SK-N-SH (cell line): ENCODE measurements at regions of chr11 and their contacts with region 1.

Region 1: DNA sequence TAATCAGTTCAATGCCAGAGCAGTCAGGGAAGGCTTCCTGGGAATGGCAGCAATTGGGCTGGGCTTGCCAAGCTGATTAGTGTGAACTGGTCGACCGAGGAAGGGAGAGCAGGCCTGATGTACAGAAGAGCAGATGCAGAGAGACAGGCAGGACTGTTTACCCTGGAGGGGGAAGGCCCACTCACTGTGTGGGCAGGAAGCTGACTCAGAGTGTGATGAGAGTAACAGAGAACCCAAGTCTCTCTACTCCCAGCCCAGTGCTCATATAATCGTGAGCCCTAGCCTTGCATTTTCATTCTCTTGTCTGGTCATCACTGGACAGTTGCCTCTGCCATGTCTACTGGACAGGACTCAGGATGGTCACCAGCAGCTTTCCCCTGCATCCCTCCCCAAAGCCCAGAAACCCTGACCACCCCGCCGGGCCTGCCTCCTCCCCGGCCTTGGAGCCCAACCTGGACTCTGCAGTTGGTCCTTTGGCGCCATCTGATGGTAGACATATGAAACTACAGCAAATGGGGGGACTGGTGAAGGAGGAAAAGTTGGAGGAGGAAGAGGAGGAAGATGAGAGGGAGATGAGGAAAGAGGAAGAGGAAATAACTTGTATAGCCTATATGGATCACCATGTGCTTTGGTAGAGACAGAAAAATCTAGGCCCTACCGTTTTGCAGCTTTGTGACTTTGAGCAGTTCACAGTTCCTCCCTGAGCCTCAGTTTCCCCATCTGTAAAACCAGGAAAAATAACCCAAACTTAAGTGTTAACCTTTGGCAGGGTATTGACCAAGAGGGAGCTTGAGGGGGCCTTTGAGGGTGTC is 43.4 kb upstream of the PRDM11 start:
- DNase-seq: peak; percentile 87
- H3K4me3 ChIP-seq: peak overlapping the region in 1 of 2 experiments; percentile 49; a peak in 2 of 4 replicates
- H3K27ac ChIP-seq: peak overlapping the region in 1 of 2 experiments; percentile 26; a peak in 1 of 4 replicates
- H3K4me1 ChIP-seq: peaks cover 0 to 4% of the 10 kb centered on the region in 2 experiments; a peak in 2 of 4 replicates
- H3K27me3 ChIP-seq: peaks cover 21% of the 10 kb centered on the region; the same call in 1 of the 2 replicates
- CTCF ChIP-seq: peak; percentile 98
- EP300 ChIP-seq: no peak; a peak in 1 of 4 replicates
- RAD21 ChIP-seq: peak; percentile 97

Region 2: DNA sequence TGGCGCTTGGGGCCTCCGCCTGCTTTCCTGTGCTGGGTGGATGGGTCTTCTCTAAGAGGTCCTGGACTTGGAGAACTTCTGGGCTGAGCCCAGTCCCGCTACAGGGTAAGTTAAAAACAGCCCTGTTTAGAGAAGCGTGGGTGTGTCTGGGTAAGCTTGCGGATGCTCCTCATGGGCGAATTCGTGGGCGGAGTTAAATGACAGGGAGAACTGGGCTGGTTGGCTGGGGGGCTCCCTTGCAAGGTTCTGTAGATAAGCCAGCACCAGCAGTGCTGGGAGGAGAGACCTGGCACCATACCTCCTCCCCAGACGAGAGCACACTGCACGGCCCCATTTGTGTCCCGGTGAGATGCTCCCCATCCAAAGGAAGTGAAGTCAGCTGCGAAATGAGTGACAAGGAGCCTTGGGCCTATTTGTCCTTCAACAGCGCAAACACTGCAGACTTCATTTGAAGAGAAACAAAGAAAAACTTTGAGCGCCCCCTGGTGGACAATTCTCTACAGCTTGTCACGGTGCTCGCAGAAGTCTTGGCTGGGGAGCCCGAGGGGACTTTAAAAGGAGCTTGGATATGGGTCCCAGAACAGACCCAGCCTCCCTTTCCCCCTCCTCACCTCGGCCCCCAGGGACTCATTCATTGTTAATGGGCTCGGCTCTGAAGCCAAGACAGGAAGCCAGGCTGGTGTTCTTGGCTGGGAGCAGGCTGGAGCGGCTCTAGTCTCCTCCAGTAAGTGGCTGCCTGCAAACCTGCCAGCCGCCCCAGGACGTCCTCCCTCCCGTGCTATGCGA is 191.8 kb before region 1 on chr11:
- CTCF ChIA-PET with region 1: interaction called, 15 read pairs
- POLR2A ChIA-PET with region 1: no interaction called
- DNase-seq: peak; percentile 83
- H3K4me3 ChIP-seq: no peak overlapping the region; a peak in 1 of 4 replicates
- H3K27ac ChIP-seq: no peak overlapping the region; a peak in 1 of 4 replicates
- H3K4me1 ChIP-seq: peaks cover 0 to 10% of the 10 kb centered on the region in 2 experiments; a peak in 1 of 4 replicates
- H3K27me3 ChIP-seq: 0 out of 2 replicates have a peak, but pooled peaks cover 5% of the 10 kb centered on the region
- CTCF ChIP-seq: peak; percentile 87
- EP300 ChIP-seq: no peak
- RAD21 ChIP-seq: peak; percentile 83

Region 3: GRCh38 chr11:44957040-44957515 is 145.9 kb before region 1 on chr11:
- CTCF ChIA-PET with region 1: interaction called, 19 read pairs
- POLR2A ChIA-PET with region 1: no interaction called
- DNase-seq: no peak
- H3K4me3 ChIP-seq: no peak overlapping the region
- H3K27ac ChIP-seq: no peak overlapping the region
- H3K4me1 ChIP-seq: peaks cover 4% of the 10 kb centered on the region in 2 experiments; a peak in 2 of 4 replicates
- H3K27me3 ChIP-seq: no peaks in the 10 kb centered on the region
- CTCF ChIP-seq: no peak
- EP300 ChIP-seq: no peak
- RAD21 ChIP-seq: no peak

Region 4: GRCh38 chr11:45025716-45026492 is 77.1 kb before region 1 on chr11:
- CTCF ChIA-PET with region 1: interaction called, 12 read pairs
- POLR2A ChIA-PET with region 1: no interaction called
- DNase-seq: peak; percentile 77
- H3K4me3 ChIP-seq: no peak overlapping the region
- H3K27ac ChIP-seq: peak overlapping the region in 1 of 2 experiments; percentile 74; a peak in 2 of 4 replicates
- H3K4me1 ChIP-seq: peaks cover 0 to 19% of the 10 kb centered on the region in 2 experiments; a peak in 1 of 4 replicates
- H3K27me3 ChIP-seq: peaks cover 23% of the 10 kb centered on the region; the same call in 1 of the 2 replicates
- CTCF ChIP-seq: no peak
- EP300 ChIP-seq: no peak; a peak in 1 of 4 replicates
- RAD21 ChIP-seq: no peak

Region 5: GRCh38 chr11:45073685-45074141 is 29.3 kb before region 1 on chr11:
- CTCF ChIA-PET with region 1: interaction called, 15 read pairs
- POLR2A ChIA-PET with region 1: no interaction called
- DNase-seq: no peak
- H3K4me3 ChIP-seq: no peak overlapping the region
- H3K27ac ChIP-seq: no peak overlapping the region
- H3K4me1 ChIP-seq: peaks cover 0 to 7% of the 10 kb centered on the region in 2 experiments; a peak in 2 of 4 replicates
- H3K27me3 ChIP-seq: peaks cover 15% of the 10 kb centered on the region; the same call in 1 of the 2 replicates
- CTCF ChIP-seq: no peak
- EP300 ChIP-seq: no peak
- RAD21 ChIP-seq: no peak

Region 6: GRCh38 chr11:45313171-45313865 is 210.3 kb after region 1 on chr11:
- CTCF ChIA-PET with region 1: interaction called, 35 read pairs
- POLR2A ChIA-PET with region 1: no interaction called
- DNase-seq: no peak
- H3K4me3 ChIP-seq: no peak overlapping the region
- H3K27ac ChIP-seq: no peak overlapping the region
- H3K4me1 ChIP-seq: no peaks in the 10 kb centered on the region
- H3K27me3 ChIP-seq: no peaks in the 10 kb centered on the region; the same call in 1 of the 2 replicates
- CTCF ChIP-seq: no peak
- EP300 ChIP-seq: no peak
- RAD21 ChIP-seq: no peak

Region 7: GRCh38 chr11:45556851-45557707 is 454.1 kb after region 1 on chr11:
- CTCF ChIA-PET with region 1: no interaction called
- POLR2A ChIA-PET with region 1: no interaction called
- DNase-seq: no peak
- H3K4me3 ChIP-seq: no peak overlapping the region
- H3K27ac ChIP-seq: no peak overlapping the region
- H3K4me1 ChIP-seq: peaks cover 0 to 11% of the 10 kb centered on the region in 2 experiments; a peak in 1 of 4 replicates
- H3K27me3 ChIP-seq: no peaks in the 10 kb centered on the region; the same call in 1 of the 2 replicates
- CTCF ChIP-seq: no peak
- EP300 ChIP-seq: no peak
- RAD21 ChIP-seq: no peak